Mammary epithelial cell (primary cell): ENCODE measurements at regions of chr1 and their contacts with region 1.

Region 1: GRCh38 chr1:235328357-235329138 is at the start of gene GGPS1:
- DNase-seq: peak; percentile 96
- H3K4me3 ChIP-seq: peak within 1 kb of the TSS; percentile 77 to 96 (median 95)
- H3K27ac ChIP-seq: peak within 1 kb of the TSS; percentile 90
- H3K4me1 ChIP-seq: peaks cover 24% of the 10 kb centered on the region
- H3K27me3 ChIP-seq: no peaks in the 10 kb centered on the region
- CTCF ChIP-seq: peak in 1 of 2 donors; percentile 7
- total RNA-seq, gene GGPS1: 35.8 to 37.9 TPM

Region 2: DNA sequence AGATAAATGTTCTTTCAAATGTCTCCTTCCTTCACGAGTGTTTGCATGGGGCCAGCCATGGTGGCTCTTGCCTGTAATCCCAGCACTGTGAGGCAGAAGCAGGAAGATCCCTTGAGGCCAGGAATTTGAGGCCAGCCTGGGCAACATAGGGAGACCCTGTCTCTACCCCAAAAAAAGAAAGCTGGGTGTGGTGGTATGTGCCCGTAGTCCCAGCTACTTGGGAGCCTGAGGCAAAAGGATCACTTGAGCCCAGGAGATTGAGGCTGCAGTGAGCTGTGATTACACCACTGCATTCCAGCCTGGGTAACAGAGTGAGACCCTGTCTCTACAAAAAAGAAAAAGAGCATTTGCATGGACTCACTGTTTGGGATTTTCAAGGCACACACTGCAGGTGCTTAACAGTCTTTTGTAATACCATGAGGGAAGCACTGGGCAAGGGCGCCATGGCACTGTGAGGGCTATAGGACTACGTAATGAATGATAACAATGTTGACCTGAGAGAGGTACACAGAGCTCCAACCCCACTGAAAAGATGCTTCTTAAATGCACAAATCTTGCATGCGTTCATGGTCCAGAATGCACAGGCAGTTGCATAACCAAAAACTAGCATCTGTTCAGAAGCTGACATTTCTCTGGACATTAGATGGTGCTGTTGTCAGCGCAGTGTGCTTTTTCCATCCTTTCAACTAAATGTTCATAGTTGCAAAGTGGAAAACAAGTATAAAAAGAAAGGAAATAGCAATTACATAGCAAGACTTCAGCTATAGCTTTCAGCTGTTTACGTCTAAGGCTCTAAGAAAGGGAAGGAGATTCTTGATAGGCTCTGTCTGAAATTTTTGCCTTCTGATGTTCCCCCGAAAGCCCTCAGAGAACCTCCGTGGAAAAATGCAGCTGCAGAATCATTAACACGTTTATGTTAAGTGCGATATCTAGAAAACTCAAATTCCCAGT is 841.8 kb before region 1 on chr1:
- CTCF ChIA-PET with region 1: no interaction called
- dilution Hi-C with region 1: no loop called
- in situ Hi-C with region 1: no loop called
- intact Hi-C with region 1: loop called (anchors 10 kb)
- DNase-seq: peak; percentile 60
- H3K4me3 ChIP-seq: no peak overlapping the region
- H3K27ac ChIP-seq: no peak overlapping the region
- H3K4me1 ChIP-seq: peaks cover 8% of the 10 kb centered on the region
- H3K27me3 ChIP-seq: no peaks in the 10 kb centered on the region
- CTCF ChIP-seq: peak; percentile 79 to 83

Region 3: GRCh38 chr1:235105051-235106043 is 223.2 kb before region 1 on chr1:
- CTCF ChIA-PET with region 1: no interaction called
- dilution Hi-C with region 1: no loop called
- in situ Hi-C with region 1: no loop called
- intact Hi-C with region 1: loop called (anchors 10 kb)
- DNase-seq: no peak
- H3K4me3 ChIP-seq: peak overlapping the region in 1 of 3 experiments; percentile 25
- H3K27ac ChIP-seq: no peak overlapping the region
- H3K4me1 ChIP-seq: peaks cover 17% of the 10 kb centered on the region
- H3K27me3 ChIP-seq: no peaks in the 10 kb centered on the region
- CTCF ChIP-seq: no peak

Region 4: DNA sequence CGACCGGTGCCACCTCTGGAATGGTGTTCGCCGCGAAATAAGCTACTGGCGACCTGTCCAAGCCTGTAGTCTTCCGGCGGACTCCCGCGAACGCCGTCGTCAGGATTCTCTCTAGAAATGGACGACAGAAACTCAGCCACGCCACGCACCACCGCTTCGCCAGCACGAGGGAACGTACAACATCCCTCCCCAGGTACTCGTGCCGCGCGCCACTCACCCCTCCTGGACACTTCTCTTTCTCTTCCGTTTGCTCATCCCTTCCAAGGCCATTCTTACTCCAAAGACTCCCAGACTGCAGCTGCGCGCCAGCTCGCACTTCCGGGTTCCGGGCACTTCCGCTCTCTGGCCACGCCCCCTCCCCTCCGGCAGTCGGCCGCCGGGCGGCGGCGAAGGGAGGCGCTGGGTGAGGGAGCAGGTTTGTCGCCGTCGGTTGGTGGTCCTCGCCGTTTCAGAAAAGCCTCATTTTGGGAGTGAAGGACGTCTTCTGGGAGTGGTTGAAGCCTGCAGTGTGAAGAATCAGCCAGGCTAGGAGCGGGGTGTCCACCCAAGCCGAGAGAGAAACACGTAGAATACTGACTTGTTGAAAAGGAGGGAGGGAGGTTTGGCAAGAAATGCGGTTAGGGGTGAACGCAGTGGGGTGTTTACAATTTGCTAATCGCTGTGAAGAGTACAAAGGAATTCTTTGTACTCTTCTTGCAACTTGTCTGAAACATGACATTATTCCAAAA is 167.4 kb before region 1 on chr1 and contains the start of gene RBM34:
- CTCF ChIA-PET with region 1: no interaction called
- dilution Hi-C with region 1: no loop called
- in situ Hi-C with region 1: no loop called
- intact Hi-C with region 1: loop called (anchors 2 kb)
- DNase-seq: peak; percentile 90
- H3K4me3 ChIP-seq: peak within 1 kb of the TSS; percentile 76 to 94 (median 81)
- H3K27ac ChIP-seq: peak within 1 kb of the TSS; percentile 90
- H3K4me1 ChIP-seq: peaks cover 12% of the 10 kb centered on the region
- H3K27me3 ChIP-seq: no peaks in the 10 kb centered on the region
- CTCF ChIP-seq: peak in 1 of 2 donors; percentile 28
- total RNA-seq, gene RBM34: 44.8 to 96.2 TPM

Region 5: DNA sequence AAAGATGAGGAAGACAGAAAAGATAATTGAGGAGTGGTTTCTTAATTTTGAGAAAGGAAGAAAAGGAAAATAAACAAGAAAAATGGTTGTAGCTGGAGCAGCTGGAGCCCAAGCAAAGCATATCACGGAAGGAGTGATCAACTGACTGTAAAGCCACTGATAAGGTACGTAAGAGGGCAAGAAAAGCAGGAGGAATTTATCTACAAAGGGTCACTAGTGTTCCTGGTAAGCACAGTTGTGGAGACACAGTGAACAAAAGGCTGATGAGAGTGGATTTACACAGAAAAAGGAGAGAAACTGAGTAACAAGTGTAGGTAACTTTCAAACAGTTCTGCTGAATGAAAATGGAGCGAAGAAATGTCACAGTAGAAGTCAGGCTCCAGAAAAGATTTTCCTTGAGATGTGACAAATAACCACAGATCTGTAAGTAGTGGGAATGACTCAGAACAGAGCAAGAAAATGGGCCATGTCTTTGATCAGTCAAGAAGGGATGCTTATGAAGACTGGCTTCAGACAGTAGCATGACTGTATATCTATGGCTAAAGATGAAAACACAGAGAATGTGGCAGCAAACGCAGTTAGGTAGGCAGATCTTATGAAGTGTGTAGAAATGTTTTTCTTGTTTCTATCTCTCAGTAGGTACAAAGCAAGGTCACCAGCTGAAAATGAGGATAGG is 121.9 kb before region 1 on chr1:
- CTCF ChIA-PET with region 1: no interaction called
- dilution Hi-C with region 1: no loop called
- in situ Hi-C with region 1: no loop called
- intact Hi-C with region 1: no loop called
- DNase-seq: peak; percentile 42
- H3K4me3 ChIP-seq: no peak overlapping the region
- H3K27ac ChIP-seq: no peak overlapping the region
- H3K4me1 ChIP-seq: no peaks in the 10 kb centered on the region
- H3K27me3 ChIP-seq: no peaks in the 10 kb centered on the region
- CTCF ChIP-seq: no peak

Region 6: DNA sequence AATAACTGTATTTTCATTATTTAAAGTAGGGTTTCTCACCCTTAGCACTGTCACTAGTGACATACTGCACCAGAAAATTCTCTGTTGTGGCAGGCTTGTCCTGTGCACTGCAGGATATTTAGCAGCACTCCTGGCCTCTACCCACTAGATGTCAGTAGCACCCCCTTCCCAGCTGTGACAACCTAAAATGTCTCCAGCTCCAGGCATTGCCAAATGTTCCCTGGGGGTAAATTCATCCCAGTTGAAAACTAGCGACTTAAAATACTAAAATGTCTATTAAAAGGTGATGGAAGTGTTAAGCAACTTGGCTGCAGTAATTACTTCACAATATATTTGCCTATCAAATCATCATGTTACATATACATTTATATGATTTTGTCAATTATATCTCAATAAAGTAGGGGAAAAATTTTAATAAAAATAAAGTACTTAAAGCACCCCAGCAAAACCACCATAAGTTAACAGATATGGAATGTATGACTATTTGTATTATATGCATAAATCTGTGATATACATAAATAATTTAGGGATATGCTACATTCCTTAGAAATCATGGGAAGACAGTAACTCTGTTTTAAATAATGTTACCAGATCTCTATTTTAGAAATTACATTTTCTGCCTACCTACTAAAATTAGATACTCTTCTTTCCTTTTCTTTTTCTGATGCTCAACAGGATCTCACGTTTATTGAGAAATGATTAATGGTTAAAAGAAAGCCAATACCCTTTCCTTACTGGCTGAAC is 75.2 kb before region 1 on chr1:
- CTCF ChIA-PET with region 1: no interaction called
- dilution Hi-C with region 1: no loop called
- in situ Hi-C with region 1: no loop called
- intact Hi-C with region 1: loop called (anchors 1 kb)
- DNase-seq: peak; percentile 63
- H3K4me3 ChIP-seq: no peak overlapping the region
- H3K27ac ChIP-seq: no peak overlapping the region
- H3K4me1 ChIP-seq: no peaks in the 10 kb centered on the region
- H3K27me3 ChIP-seq: no peaks in the 10 kb centered on the region
- CTCF ChIP-seq: peak; percentile 73 to 93

Region 7: DNA sequence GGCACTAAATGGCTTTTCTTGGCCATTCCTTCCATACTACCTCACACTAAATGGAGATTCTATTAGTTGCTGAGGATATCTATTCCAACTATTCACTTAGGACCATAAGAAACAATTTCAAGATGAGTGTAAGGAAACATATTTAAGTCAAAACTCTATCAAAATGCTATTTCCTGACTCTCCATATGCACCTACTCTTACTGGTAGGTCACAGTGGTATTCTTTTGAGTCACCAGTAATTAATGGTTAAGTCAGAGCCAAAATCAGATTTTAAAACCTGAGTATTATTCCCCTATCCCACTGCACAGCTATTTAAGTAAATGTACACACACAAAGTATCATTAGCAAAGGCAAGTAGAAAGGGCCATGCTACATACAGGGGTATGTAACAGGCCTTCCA is 50.8 kb before region 1 on chr1:
- CTCF ChIA-PET with region 1: no interaction called
- dilution Hi-C with region 1: no loop called
- in situ Hi-C with region 1: no loop called
- intact Hi-C with region 1: no loop called
- DNase-seq: no peak
- H3K4me3 ChIP-seq: no peak overlapping the region
- H3K27ac ChIP-seq: no peak overlapping the region
- H3K4me1 ChIP-seq: no peaks in the 10 kb centered on the region
- H3K27me3 ChIP-seq: no peaks in the 10 kb centered on the region
- CTCF ChIP-seq: no peak

Region 8: DNA sequence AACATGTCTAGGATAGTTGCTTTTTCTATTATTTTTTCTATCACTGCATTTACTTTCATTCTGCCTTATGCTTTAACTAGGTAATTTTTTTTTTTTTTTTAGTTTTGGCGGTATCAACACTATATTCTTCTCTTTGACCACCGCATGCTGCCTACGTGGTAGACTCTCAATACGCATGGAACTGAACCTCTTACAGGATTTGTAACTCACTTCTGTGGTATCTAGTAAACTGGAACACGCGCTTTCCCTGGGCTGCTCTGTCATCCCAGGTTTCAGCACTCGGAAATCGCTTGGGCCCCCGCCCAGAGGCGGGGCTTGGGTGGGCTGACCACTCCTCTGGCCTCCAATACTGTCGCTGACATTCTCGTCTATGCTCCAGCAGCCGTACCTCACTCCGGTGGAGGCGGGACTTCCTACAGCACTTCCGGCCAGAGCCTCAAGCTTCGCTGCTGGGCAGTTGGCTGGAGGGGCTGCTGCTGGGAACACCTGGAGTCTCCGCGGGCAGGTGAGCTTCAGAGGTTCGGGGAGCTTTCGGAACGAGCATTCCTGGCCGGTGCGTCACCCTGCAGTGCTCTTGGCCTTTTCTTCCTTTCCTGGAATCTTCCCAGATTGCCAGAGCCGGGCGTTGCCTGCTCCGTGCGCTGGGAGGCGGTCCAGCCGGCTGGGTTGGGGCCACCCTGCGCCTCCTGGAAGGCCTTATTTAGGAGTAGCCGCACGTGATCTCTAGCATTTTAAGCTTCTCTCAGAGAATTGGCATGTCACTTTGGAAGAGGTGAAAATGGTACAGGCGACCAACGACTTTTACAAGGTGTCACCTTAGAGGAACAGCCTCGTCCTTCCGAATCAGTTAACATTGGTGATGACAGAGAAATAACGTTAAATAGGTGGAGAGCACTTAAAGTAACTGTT is 38.7 kb after region 1 on chr1 and contains the start of gene TBCE:
- CTCF ChIA-PET with region 1: no interaction called
- dilution Hi-C with region 1: no loop called
- in situ Hi-C with region 1: no loop called
- intact Hi-C with region 1: loop called (anchors 1 kb)
- DNase-seq: peak; percentile 100
- H3K4me3 ChIP-seq: peak within 1 kb of the TSS; percentile 53 to 68 (median 63)
- H3K27ac ChIP-seq: peak within 1 kb of the TSS; percentile 94
- H3K4me1 ChIP-seq: peaks cover 15% of the 10 kb centered on the region
- H3K27me3 ChIP-seq: no peaks in the 10 kb centered on the region
- CTCF ChIP-seq: peak in 1 of 2 donors; percentile 44
- total RNA-seq, gene TBCE: 15.8 to 19.4 TPM

Region 9: DNA sequence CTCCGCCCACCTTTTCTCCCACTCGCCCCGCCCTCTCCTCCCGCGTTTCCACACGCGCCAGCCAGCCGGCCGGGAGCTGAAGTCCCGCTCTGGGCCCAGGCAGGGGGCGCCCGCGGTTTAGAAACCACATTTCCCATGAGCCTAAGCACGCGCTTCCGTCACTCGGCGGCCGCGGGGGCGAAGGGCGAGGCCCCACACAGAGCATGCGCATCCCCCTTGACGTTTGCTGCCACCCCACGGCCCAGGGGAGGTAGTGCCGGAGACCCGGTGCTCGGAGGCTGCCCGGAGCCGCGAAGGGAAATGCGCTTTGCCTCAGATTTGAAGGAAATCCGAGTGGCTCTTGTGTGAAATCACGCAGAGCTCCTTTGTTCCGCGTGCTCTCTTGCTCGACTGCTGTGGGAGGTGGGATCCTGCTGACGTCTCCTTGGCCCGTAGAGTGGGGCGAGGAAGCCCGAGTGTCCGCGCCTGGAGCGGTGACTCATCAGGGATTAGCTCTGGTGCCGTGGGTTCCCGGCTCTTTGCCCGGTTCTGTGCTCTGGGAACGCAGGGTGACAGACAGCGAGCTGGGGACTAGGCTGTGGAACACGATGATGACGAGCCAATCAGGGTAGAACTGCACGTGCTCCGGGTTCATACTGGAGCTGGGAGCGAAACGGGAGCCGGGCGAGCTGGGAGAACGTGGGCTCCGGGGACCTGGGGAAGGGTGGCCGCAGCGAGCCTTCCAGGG is 176.1 kb after region 1 on chr1:
- CTCF ChIA-PET with region 1: no interaction called
- dilution Hi-C with region 1: no loop called
- in situ Hi-C with region 1: no loop called
- intact Hi-C with region 1: loop called (anchors 5 kb)
- DNase-seq: peak; percentile 99
- H3K4me3 ChIP-seq: peak overlapping the region; percentile 93 to 96 (median 95)
- H3K27ac ChIP-seq: peak overlapping the region; percentile 97
- H3K4me1 ChIP-seq: peaks cover 4% of the 10 kb centered on the region
- H3K27me3 ChIP-seq: no peaks in the 10 kb centered on the region
- CTCF ChIP-seq: peak; percentile 65 to 88